Activated CD8-positive, alpha-beta T cell treated with anti-CD3 and anti-CD28 coated beads for 36 hours (primary cell): ENCODE measurements at regions of chr17 and their contacts with region 1.

Region 1: GRCh38 chr17:76557368-76558197 is 17.7 kb downstream of the PRCD start:
- DNase-seq: peak; percentile 97
- ATAC-seq: peak; percentile 94
- H3K4me3 Mint-ChIP-seq: peak overlapping the region; percentile 99
- H3K27ac Mint-ChIP-seq: peak overlapping the region; percentile 98
- H3K4me1 Mint-ChIP-seq: peaks cover 46% of the 10 kb centered on the region
- H3K27me3 Mint-ChIP-seq: no peaks in the 10 kb centered on the region
- CTCF ChIP-seq: peak; percentile 60

Region 2: DNA sequence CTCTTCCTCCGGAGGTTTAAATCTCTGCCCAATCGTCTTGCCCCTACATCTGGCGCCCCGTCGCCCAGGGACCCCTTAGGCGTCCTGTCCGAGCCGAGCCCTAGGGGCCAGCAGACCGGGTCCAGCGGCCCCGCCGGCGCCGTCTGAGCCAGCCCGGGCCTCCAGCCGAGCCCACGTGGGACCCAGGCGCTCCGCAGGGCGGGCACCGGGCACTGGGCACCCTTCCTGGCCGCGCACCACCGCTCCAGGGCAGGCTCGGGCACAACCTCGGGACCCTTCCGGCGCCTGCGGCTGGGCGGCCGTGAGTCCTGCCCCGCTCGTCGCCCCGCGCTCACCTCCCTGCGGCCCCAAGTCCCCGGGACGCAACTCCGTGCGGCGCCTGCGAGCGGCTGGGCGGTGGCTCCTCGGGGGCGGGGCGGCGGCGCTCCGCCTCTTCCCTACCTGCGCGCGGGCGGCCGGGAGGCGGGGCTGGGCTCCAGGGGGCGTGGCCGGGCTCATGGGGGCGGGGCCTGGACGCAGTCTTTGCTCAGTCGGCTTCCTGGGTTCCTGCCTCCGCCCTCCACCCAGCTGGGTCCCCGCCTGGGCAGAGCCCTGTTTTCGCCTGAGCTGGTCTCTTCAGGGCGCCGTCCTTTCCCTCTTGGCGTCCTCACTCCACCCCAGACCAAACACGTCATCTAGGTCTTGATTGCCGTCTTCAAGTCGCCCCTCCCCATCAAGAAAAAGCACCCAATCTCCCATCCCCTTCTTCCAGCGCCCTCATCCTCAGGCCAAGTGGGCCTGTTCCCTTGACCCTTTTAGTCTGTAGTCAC is 56.4 kb before region 1 on chr17 and contains the start of gene RHBDF2:
- CTCF ChIA-PET with region 1: no interaction called
- POLR2A ChIA-PET with region 1: interaction called, 16 read pairs
- intact Hi-C with region 1: no loop called
- DNase-seq: peak; percentile 95
- ATAC-seq: peak; percentile 97
- H3K4me3 Mint-ChIP-seq: peak within 1 kb of the TSS; percentile 90
- H3K27ac Mint-ChIP-seq: peak within 1 kb of the TSS; percentile 92
- H3K4me1 Mint-ChIP-seq: peaks cover 40% of the 10 kb centered on the region
- H3K27me3 Mint-ChIP-seq: no peaks in the 10 kb centered on the region
- CTCF ChIP-seq: no peak
- total RNA-seq, gene RHBDF2: 19.9 to 20.4 TPM

Region 3: GRCh38 chr17:76547184-76547641 is 10.4 kb before region 1 on chr17:
- CTCF ChIA-PET with region 1: interaction called, 19 read pairs
- POLR2A ChIA-PET with region 1: interaction called, 40 read pairs
- intact Hi-C with region 1: no loop called
- DNase-seq: peak; percentile 70
- ATAC-seq: peak; percentile 89
- H3K4me3 Mint-ChIP-seq: no peak overlapping the region
- H3K27ac Mint-ChIP-seq: no peak overlapping the region
- H3K4me1 Mint-ChIP-seq: peaks cover 5% of the 10 kb centered on the region
- H3K27me3 Mint-ChIP-seq: peaks cover 4% of the 10 kb centered on the region
- CTCF ChIP-seq: peak; percentile 67

Region 4: DNA sequence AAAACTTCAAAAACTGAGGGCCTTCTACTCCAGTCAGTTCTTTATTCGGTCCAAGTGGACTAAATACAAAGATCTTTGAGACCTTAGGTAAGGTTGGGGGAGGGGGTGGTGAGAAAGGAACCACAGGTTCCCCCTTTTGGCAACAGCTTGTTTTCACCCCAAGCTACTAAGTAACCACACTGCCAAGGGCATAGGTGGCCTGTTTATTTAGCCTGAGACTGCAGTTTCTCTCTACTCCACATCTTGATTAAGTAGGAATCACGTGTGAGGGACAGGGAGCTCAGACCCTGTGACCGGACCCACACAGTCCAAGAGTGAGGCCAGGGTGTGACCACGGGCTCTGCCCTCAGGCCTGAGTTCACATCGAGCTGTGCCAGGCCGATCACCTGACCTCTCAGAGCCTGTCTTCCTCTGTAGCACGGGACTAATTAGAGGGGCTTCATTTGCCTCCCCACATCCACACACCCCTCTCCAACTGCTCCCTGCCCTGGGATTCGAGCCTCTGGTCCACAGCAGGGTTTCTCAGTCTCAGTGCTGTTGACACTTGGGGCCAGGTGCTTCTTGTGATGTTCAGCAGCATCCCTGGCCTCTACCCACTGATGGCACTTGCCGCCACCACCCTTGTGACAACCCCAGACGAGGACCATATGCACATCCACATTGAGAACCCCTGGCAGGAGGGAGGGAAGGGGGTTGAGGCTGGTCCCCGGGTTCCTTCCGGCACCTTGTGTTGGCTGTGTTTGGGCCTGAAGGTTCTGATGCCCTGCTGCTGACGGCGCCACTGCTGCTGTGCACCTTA is 10.2 kb after region 1 on chr17:
- CTCF ChIA-PET with region 1: interaction called, 14 read pairs
- POLR2A ChIA-PET with region 1: interaction called, 37 read pairs
- intact Hi-C with region 1: no loop called
- DNase-seq: no peak
- ATAC-seq: no peak
- H3K4me3 Mint-ChIP-seq: no peak overlapping the region
- H3K27ac Mint-ChIP-seq: peak overlapping the region; percentile 30
- H3K4me1 Mint-ChIP-seq: peaks cover 41% of the 10 kb centered on the region
- H3K27me3 Mint-ChIP-seq: no peaks in the 10 kb centered on the region
- CTCF ChIP-seq: no peak

Region 5: GRCh38 chr17:76755285-76755684 is 197.7 kb after region 1 on chr17:
- CTCF ChIA-PET with region 1: no interaction called
- POLR2A ChIA-PET with region 1: no interaction called
- intact Hi-C with region 1: no loop called
- DNase-seq: no peak
- ATAC-seq: no peak
- H3K4me3 Mint-ChIP-seq: no peak overlapping the region
- H3K27ac Mint-ChIP-seq: no peak overlapping the region
- H3K4me1 Mint-ChIP-seq: peaks cover 18% of the 10 kb centered on the region
- H3K27me3 Mint-ChIP-seq: no peaks in the 10 kb centered on the region
- CTCF ChIP-seq: no peak

Region 6: GRCh38 chr17:76781056-76781982 is 223.7 kb after region 1 on chr17:
- CTCF ChIA-PET with region 1: no interaction called
- POLR2A ChIA-PET with region 1: no interaction called
- intact Hi-C with region 1: no loop called
- DNase-seq: peak; percentile 2
- ATAC-seq: no peak
- H3K4me3 Mint-ChIP-seq: no peak overlapping the region
- H3K27ac Mint-ChIP-seq: no peak overlapping the region
- H3K4me1 Mint-ChIP-seq: no peaks in the 10 kb centered on the region
- H3K27me3 Mint-ChIP-seq: no peaks in the 10 kb centered on the region
- CTCF ChIP-seq: no peak